WTC11 (cell line): ENCODE measurements at regions of chr22 and their contacts with region 1.

Region 1: DNA sequence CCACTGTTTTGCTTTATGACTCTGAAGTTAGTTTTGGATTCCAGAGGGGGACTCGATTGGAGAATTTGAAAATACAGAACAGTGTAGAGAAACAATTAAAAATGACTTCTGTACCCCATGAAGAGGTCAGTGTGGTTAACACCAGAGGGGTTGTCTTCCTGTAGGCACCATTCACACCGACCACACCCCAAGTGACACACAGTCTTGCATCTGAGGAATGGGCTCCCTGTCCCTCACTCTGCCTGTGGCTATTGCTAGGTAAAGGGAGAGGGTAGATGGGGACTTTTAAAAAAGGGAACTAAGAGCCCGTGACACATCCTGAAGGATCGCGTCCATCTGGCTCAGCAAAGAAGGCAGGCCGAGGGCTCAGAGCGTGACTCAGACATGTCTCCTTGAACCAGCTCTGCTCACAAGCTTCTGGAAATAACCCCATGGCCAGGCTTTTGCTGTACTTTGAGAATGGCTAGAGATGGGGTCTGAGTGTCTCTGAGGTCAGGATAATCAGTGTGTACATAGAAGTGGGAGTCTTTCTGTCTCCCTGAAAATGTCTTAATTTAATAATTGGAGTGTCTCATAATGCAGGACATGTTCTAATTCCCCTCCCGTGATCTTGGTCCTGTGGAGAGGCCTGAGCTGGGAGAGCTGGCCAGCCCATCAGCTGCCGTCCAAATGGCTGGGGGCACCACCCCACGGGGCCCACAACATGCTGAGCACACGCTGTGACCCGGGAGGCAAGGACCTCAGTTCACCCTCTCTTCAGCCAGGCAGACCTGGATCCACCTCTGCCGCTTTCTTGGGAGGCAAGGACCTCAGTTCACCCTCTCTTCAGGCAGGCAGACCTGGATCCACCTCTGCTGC is 39.3 kb downstream of the SGSM1 start:
- DNase-seq: no peak
- ATAC-seq: no peak
- H3K4me3 Mint-ChIP-seq: no peak overlapping the region
- H3K27ac Mint-ChIP-seq: no peak overlapping the region
- H3K4me1 Mint-ChIP-seq: peaks cover 2% of the 10 kb centered on the region; the same call in 1 of the 2 replicates
- H3K27me3 Mint-ChIP-seq: no peaks in the 10 kb centered on the region; the same call in 1 of the 2 replicates
- CTCF ChIP-seq: no peak

Region 2: GRCh38 chr22:24834845-24835570 is 10.3 kb before region 1 on chr22:
- CTCF ChIA-PET with region 1: interaction called, 12 read pairs
- POLR2A ChIA-PET with region 1: no interaction called
- DNase-seq: peak; percentile 45
- ATAC-seq: peak; percentile 93
- H3K4me3 Mint-ChIP-seq: no peak overlapping the region
- H3K27ac Mint-ChIP-seq: peak overlapping the region; percentile 29
- H3K4me1 Mint-ChIP-seq: peaks cover 29% of the 10 kb centered on the region
- H3K27me3 Mint-ChIP-seq: no peaks in the 10 kb centered on the region
- CTCF ChIP-seq: 0 out of 2 replicates have a peak, but pooled peaks have one; percentile 16

Region 3: GRCh38 chr22:24867323-24868022 is 22.2 kb after region 1 on chr22:
- CTCF ChIA-PET with region 1: interaction called, 14 read pairs
- POLR2A ChIA-PET with region 1: no interaction called
- DNase-seq: no peak
- ATAC-seq: no peak
- H3K4me3 Mint-ChIP-seq: no peak overlapping the region
- H3K27ac Mint-ChIP-seq: no peak overlapping the region
- H3K4me1 Mint-ChIP-seq: no peaks in the 10 kb centered on the region
- H3K27me3 Mint-ChIP-seq: no peaks in the 10 kb centered on the region; the same call in 1 of the 2 replicates
- CTCF ChIP-seq: no peak

Region 4: DNA sequence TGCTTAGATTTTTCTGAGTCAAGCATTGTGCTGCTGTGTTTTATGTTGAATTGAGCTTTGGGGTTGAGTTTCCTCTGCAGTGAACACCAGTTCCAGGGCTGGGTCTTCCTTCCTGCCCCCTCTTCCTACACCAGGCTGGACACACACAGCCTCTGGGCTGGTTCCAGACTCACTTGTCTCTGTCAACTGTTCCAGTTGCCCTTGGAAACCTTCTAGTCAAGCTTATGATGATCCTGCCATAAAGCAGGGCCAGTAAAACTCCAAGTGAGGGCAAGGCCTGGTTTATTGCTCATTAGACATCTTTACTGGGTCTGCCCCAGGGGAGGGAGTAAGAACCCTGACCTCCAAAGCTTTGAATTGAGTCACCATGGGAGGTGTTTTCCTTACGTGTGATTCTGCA is 168.3 kb after region 1 on chr22:
- CTCF ChIA-PET with region 1: no interaction called
- POLR2A ChIA-PET with region 1: no interaction called
- DNase-seq: no peak
- ATAC-seq: no peak
- H3K4me3 Mint-ChIP-seq: no peak overlapping the region
- H3K27ac Mint-ChIP-seq: no peak overlapping the region
- H3K4me1 Mint-ChIP-seq: peaks cover 33% of the 10 kb centered on the region
- H3K27me3 Mint-ChIP-seq: no peaks in the 10 kb centered on the region
- CTCF ChIP-seq: no peak